IMR-90 (cell line): ENCODE measurements at regions of chr17 and their contacts with region 1.

Region 1: GRCh38 chr17:7614422-7615264 is at the start of gene FXR2:
- DNase-seq: peak; percentile 100
- ATAC-seq: peak; percentile 96
- H3K4me3 ChIP-seq: peak within 1 kb of the TSS; percentile 78
- H3K27ac ChIP-seq: peak within 1 kb of the TSS; percentile 75
- H3K4me1 ChIP-seq: peaks cover 7% of the 10 kb centered on the region
- H3K27me3 ChIP-seq: no peaks in the 10 kb centered on the region
- CTCF ChIP-seq: peak; percentile 87
- POLR2A ChIP-seq: peak; percentile 68
- RAD21 ChIP-seq: peak; percentile 37
- total RNA-seq, gene FXR2: 38.6 and 39.1 TPM in 2 replicates

Region 2: DNA sequence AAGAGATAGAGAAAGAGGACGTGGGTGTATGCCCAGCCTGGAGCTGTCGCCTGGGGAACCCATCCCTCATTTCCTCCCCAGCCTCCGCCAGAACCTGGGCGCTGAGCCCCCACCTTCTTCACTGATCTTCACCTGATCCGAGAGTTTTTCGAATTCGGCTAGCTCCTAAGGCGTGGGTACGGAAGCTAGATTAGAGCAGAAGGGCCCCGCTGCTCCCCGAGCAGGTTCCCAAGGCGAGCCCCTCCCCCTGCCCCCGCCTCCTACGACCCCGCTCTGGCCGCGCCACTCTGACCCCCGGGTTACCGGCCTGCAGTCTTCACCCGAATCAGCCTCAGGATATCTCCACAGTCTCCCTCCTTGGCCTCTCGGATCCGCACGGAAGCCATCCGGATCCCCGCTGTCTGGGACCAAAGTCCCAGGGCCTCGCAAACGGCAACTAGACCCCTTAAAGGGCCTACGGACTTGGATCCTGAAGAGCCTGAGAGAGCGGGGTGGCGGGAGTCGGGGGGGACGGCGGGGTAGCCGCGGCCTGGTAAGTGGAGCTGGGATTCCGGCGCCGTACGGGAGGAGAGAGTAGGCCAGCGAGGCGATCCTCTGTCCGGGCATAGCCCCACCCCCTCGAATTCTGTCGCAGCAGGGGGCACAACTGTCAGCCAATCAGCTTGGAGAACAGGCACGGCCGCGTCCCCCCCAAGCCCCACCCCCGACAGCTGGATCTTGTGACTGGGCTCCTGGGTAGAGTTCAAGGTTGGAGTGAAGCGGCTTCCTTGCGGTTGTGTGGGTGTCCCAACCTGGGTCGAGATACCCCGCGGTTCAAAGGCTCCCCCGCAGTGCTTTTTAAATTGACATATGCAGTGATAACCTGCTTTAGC is 12.8 kb after region 1 on chr17 and contains the start of gene SAT2:
- CTCF ChIA-PET with region 1: interaction called, 14 read pairs
- POLR2A ChIA-PET with region 1: no interaction called
- dilution Hi-C with region 1: no loop called
- in situ Hi-C with region 1: no loop called
- intact Hi-C with region 1: no loop called
- DNase-seq: peak; percentile 94
- ATAC-seq: peak; percentile 99
- H3K4me3 ChIP-seq: peak within 1 kb of the TSS; percentile 86
- H3K27ac ChIP-seq: peak within 1 kb of the TSS; percentile 98
- H3K4me1 ChIP-seq: peaks cover 4% of the 10 kb centered on the region; the same call in 1 of the 2 replicates
- H3K27me3 ChIP-seq: no peaks in the 10 kb centered on the region
- CTCF ChIP-seq: no peak
- POLR2A ChIP-seq: peak; percentile 85
- RAD21 ChIP-seq: no peak
- total RNA-seq, gene SAT2: 20.4 and 21.4 TPM in 2 replicates

Region 3: GRCh38 chr17:7676533-7676932 is 61.9 kb after region 1 on chr17:
- CTCF ChIA-PET with region 1: no interaction called
- POLR2A ChIA-PET with region 1: no interaction called
- dilution Hi-C with region 1: no loop called
- in situ Hi-C with region 1: no loop called
- intact Hi-C with region 1: no loop called
- DNase-seq: no peak
- ATAC-seq: no peak
- H3K4me3 ChIP-seq: no peak overlapping the region
- H3K27ac ChIP-seq: no peak overlapping the region
- H3K4me1 ChIP-seq: no peaks in the 10 kb centered on the region
- H3K27me3 ChIP-seq: no peaks in the 10 kb centered on the region
- CTCF ChIP-seq: no peak
- POLR2A ChIP-seq: no peak
- RAD21 ChIP-seq: no peak